ENCODE measurements at regions of chr19 and their contacts with region 1.

Region 1: DNA sequence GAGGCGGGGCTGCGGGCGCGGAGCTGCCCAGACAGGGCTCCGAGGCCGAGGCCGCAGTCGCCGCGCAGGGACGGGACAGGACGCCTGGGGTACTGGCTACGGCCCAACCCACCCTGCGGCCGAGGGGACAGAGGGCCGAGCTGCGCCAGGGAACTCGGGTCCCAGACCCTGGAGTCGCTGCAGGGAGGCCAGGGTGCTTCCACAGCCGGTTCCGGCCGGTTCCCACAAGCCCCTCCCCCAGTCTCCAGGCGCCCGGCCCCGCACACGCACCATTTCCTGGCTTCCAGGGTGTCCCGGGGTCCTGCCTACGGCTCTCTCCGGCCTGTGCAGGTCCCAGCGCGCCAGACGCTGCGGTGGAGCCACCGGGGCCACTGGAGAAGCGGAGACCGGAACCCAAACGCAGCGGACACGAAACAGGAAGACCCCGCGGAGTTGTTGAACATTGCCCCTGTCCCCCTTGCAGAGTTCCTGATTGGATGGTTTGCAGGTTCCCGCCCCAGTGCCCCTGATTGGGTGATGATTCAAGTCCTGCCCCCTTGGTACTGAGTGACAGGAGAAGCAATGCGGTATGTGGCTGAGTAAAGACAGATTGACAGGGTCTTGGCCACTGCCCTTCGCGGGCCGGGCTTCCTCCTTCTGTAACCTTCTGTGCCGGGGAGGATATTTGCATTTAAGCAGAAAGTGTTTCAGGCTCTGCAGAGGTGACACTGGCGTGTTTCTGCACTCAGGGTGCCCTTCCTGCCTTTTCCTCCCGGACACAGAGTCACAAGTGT is at the start of gene ZNF564:
- DNase-seq: peak; percentile 74 to 97 (median 95)
- ATAC-seq: peak; percentile 99
- H3K4me3 ChIP-seq: peak within 1 kb of the TSS; percentile 88
- H3K4me3 Mint-ChIP-seq: peak within 1 kb of the TSS; percentile 89 to 100 (median 98)
- H3K27ac ChIP-seq: peak within 1 kb of the TSS; percentile 90
- H3K27ac Mint-ChIP-seq: peak within 1 kb of the TSS; percentile 92 to 98 (median 95)
- H3K4me1 ChIP-seq: peaks cover 8 to 28% of the 10 kb centered on the region in 2 donors
- H3K4me1 Mint-ChIP-seq: peaks cover 29 to 55% (median 47%) of the 10 kb centered on the region in 7 donors
- H3K27me3 ChIP-seq: no peaks in the 10 kb centered on the region
- H3K27me3 Mint-ChIP-seq: peaks cover 0 to 4% (median 0%) of the 10 kb centered on the region in 5 donors
- total RNA-seq, gene ZNF564: 10.5 to 33.6 (median 19.0) TPM

Region 2: DNA sequence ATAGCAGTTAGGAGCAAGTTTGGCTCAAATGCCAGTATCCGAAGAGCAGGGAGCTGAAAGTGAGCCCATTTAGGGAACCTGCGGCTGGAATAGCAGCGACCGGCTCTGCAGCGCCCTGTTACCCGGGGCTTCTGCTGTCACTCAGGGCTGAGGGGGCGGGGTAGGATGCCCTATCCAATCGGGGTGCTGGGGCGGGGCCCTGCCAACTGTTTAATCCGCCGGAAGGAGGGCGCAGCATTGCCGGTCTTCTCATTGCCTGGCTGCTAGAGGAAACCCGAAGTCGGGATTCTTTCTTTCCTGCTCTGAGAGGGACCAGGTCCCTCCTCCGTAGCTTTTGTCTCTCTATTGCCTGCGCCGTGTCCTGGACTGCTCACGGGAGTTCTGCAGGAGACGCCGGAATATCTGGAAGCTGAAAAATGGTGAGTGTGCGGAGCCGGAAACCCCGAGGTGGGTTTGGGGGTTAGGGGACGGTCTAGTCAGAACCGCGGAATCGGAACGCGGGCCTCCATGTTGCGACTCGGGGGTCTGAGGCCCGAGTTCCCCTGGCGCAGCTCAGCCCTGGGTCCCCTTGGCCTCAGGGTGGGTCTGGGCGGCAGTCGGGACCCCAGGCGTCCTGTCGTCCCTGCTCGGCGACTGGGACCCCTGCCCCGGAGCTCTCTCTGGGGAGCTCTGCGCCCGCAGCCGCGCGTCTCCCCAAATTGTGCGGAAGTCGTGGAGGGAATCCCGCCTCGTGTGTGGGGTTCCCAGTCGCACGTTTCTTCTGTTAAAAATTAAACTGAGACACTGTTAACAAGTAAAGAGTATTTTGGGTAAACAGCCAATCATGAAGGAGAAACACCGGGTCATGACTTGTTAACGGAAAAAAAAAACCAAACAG is 563.6 kb before region 1 on chr19:
- CTCF ChIA-PET with region 1: no interaction called
- POLR2A ChIA-PET with region 1: no interaction called
- intact Hi-C with region 1: loop called in 1 of 2 experiments (anchors 1 kb)
- DNase-seq: peak; percentile 73 to 90 (median 87)
- ATAC-seq: peak; percentile 95
- H3K4me3 ChIP-seq: peak overlapping the region; percentile 98
- H3K4me3 Mint-ChIP-seq: peak overlapping the region; percentile 84 to 99 (median 96)
- H3K27ac ChIP-seq: peak overlapping the region; percentile 88
- H3K27ac Mint-ChIP-seq: peak overlapping the region; percentile 70 to 97 (median 96)
- H3K4me1 ChIP-seq: peaks cover 0 to 8% of the 10 kb centered on the region in 2 donors
- H3K4me1 Mint-ChIP-seq: peaks cover 15 to 39% (median 28%) of the 10 kb centered on the region in 7 donors
- H3K27me3 ChIP-seq: no peaks in the 10 kb centered on the region
- H3K27me3 Mint-ChIP-seq: peaks cover 0 to 2% (median 0%) of the 10 kb centered on the region in 5 donors

Region 3: DNA sequence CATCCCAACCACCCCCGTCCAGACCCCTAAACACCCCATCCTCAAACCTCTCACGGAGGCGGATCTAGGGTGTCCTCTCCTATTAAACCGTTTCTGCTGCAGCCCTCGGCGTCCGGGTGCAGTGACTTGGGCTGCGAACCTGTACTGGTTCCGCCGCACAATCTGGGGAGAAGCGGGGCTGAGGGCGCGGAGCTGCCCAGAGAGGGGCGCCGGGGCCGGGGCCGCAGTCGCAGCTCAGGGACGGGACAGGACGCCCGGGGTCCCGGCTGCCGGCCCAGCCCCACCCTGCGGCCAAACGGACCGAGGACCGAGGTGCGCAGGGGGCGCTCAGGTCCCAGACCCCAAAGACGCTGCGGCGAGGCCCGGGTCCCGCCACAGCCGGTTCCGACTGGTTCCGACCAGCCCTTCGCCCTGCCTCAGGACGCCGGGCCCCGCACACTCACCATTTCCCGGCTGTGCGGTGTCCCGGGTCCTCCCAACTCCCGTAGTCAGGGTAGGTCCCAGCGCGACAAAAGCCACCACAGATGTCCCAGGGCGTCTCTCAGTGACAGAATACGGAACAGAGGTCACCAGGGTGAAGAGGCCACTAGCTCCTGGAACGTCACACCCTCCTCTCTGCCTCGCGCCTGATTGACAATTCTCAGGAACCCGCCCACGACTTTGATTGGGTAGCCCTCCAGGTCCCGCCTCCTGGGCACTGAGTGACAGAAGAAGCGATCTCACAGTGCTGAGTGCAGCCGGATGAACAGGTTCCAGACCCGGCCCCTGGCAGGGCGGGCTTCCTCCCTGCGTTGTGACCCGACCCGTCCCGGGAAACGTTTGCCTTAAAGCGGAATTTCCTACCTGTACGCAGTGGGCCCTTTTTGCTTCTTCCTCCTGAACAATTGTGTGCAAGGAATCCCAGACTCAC is 256.7 kb before region 1 on chr19 and contains the start of gene ZNF44:
- CTCF ChIA-PET with region 1: interaction called, 4 read pairs
- POLR2A ChIA-PET with region 1: no interaction called
- intact Hi-C with region 1: loop called (anchors 1 to 5 kb)
- DNase-seq: peak; percentile 77 to 96 (median 93)
- ATAC-seq: peak; percentile 99
- H3K4me3 ChIP-seq: peak within 1 kb of the TSS; percentile 99
- H3K4me3 Mint-ChIP-seq: peak within 1 kb of the TSS; percentile 89 to 99 (median 99)
- H3K27ac ChIP-seq: peak within 1 kb of the TSS; percentile 90
- H3K27ac Mint-ChIP-seq: peak within 1 kb of the TSS; percentile 93 to 99 (median 97)
- H3K4me1 ChIP-seq: peaks cover 13 to 20% of the 10 kb centered on the region in 2 donors
- H3K4me1 Mint-ChIP-seq: peaks cover 25 to 52% (median 36%) of the 10 kb centered on the region in 7 donors
- H3K27me3 ChIP-seq: no peaks in the 10 kb centered on the region
- H3K27me3 Mint-ChIP-seq: no peaks in the 10 kb centered on the region
- total RNA-seq, gene ZNF44: 16.3 to 67.4 (median 31.3) TPM

Region 4: GRCh38 chr19:12400633-12401502 is 150.4 kb before region 1 on chr19 and contains the start of gene ZNF799:
- CTCF ChIA-PET with region 1: no interaction called
- POLR2A ChIA-PET with region 1: interaction called, 3 read pairs
- intact Hi-C with region 1: loop called in 1 of 2 experiments (anchors 2 kb)
- DNase-seq: peak; percentile 55 to 79 (median 76)
- ATAC-seq: peak; percentile 96
- H3K4me3 ChIP-seq: peak within 1 kb of the TSS; percentile 91
- H3K4me3 Mint-ChIP-seq: peak within 1 kb of the TSS; percentile 88 to 96 (median 94)
- H3K27ac ChIP-seq: peak within 1 kb of the TSS; percentile 59
- H3K27ac Mint-ChIP-seq: peak within 1 kb of the TSS; percentile 75 to 93 (median 82)
- H3K4me1 ChIP-seq: no peaks in the 10 kb centered on the region
- H3K4me1 Mint-ChIP-seq: peaks cover 5 to 34% (median 20%) of the 10 kb centered on the region in 7 donors
- H3K27me3 ChIP-seq: no peaks in the 10 kb centered on the region
- H3K27me3 Mint-ChIP-seq: no peaks in the 10 kb centered on the region
- total RNA-seq, gene ZNF799: 1.7 to 9.9 (median 4.4) TPM

Region 5: DNA sequence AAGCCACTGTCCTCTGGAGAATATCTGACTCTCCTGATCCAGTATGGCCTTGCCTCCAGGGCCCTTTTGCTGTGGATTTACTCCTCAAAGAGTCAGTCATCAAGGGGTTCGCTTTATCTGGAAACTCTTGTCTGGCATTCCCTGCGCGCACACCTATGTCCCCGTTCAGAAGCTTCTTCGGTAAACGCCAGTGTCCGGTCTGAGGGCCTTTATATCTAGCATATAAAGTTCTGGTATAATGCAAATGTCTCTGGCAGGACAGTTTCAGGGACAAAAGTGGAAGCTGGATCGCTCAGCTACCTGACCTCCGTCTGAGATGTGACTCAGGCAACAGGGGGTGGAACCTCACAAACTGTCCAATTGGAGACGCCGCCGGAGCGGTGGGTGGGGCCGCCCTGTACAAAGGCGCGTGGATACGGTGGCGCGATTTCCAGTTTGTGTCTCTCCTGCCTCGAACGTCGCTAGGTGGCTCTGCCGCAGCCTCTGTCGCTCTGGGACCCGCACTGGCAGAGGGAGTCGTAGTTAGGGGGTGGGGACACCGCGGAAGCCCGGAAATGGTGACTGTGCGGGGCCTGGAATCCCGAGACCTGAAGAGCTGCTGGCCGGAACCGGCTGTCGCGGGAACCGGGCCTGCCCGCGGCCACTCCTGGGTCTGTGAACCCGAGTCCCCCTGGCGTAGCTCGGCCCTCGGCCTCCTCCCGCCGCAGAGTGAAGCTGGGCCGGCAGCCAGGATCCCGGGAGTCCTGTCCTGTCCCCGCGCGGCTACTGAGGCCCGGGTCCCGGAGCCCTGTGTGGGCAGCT is 56.0 kb before region 1 on chr19:
- CTCF ChIA-PET with region 1: no interaction called
- POLR2A ChIA-PET with region 1: interaction called, 7 read pairs
- intact Hi-C with region 1: loop called (anchors 1 to 2 kb)
- DNase-seq: peak; percentile 76 to 94 (median 91)
- ATAC-seq: peak; percentile 100
- H3K4me3 ChIP-seq: peak overlapping the region; percentile 80
- H3K4me3 Mint-ChIP-seq: peak overlapping the region; percentile 84 to 95 (median 91)
- H3K27ac ChIP-seq: peak overlapping the region; percentile 72
- H3K27ac Mint-ChIP-seq: peak overlapping the region; percentile 84 to 98 (median 91)
- H3K4me1 ChIP-seq: peaks cover 9 to 11% of the 10 kb centered on the region in 2 donors
- H3K4me1 Mint-ChIP-seq: peaks cover 0 to 16% (median 13%) of the 10 kb centered on the region in 7 donors
- H3K27me3 ChIP-seq: no peaks in the 10 kb centered on the region
- H3K27me3 Mint-ChIP-seq: no peaks in the 10 kb centered on the region

Region 6: GRCh38 chr19:12580163-12580694 is 29.0 kb after region 1 on chr19:
- CTCF ChIA-PET with region 1: no interaction called
- POLR2A ChIA-PET with region 1: no interaction called
- intact Hi-C with region 1: no loop called
- DNase-seq: no peak
- ATAC-seq: no peak
- H3K4me3 ChIP-seq: no peak overlapping the region
- H3K4me3 Mint-ChIP-seq: no peak overlapping the region
- H3K27ac ChIP-seq: no peak overlapping the region
- H3K27ac Mint-ChIP-seq: no peak overlapping the region
- H3K4me1 ChIP-seq: no peaks in the 10 kb centered on the region
- H3K4me1 Mint-ChIP-seq: peaks cover 0 to 6% (median 0%) of the 10 kb centered on the region in 7 donors
- H3K27me3 ChIP-seq: no peaks in the 10 kb centered on the region
- H3K27me3 Mint-ChIP-seq: no peaks in the 10 kb centered on the region

Region 7: GRCh38 chr19:12610540-12611360 is 59.5 kb after region 1 on chr19 and contains the starts of genes ZNF490 and ZNF791:
- CTCF ChIA-PET with region 1: no interaction called
- POLR2A ChIA-PET with region 1: interaction called, 3 read pairs
- intact Hi-C with region 1: loop called (anchors 1 to 2 kb)
- DNase-seq: peak; percentile 81 to 97 (median 94)
- ATAC-seq: peak; percentile 94
- H3K4me3 ChIP-seq: peak within 1 kb of the TSS; percentile 71
- H3K4me3 Mint-ChIP-seq: peak within 1 kb of the TSS; percentile 94 to 100 (median 100)
- H3K27ac ChIP-seq: peak within 1 kb of the TSS; percentile 95
- H3K27ac Mint-ChIP-seq: peak within 1 kb of the TSS; percentile 97 to 100 (median 99)
- H3K4me1 ChIP-seq: peaks cover 24 to 41% of the 10 kb centered on the region in 2 donors
- H3K4me1 Mint-ChIP-seq: peaks cover 16 to 48% (median 36%) of the 10 kb centered on the region in 7 donors
- H3K27me3 ChIP-seq: no peaks in the 10 kb centered on the region
- H3K27me3 Mint-ChIP-seq: no peaks in the 10 kb centered on the region
- total RNA-seq, gene ZNF490: 10.3 to 14.9 (median 11.6) TPM
- total RNA-seq, gene ZNF791: 29.1 to 53.3 (median 38.7) TPM

Region 8: GRCh38 chr19:12722566-12723380 is 171.5 kb after region 1 on chr19:
- CTCF ChIA-PET with region 1: no interaction called
- POLR2A ChIA-PET with region 1: no interaction called
- intact Hi-C with region 1: loop called in 1 of 2 experiments (anchors 5 kb)
- DNase-seq: peak; percentile 66 to 97 (median 91)
- ATAC-seq: peak; percentile 96
- H3K4me3 ChIP-seq: peak overlapping the region; percentile 91
- H3K4me3 Mint-ChIP-seq: peak overlapping the region; percentile 86 to 96 (median 93)
- H3K27ac ChIP-seq: peak overlapping the region; percentile 85
- H3K27ac Mint-ChIP-seq: peak overlapping the region; percentile 89 to 97 (median 95)
- H3K4me1 ChIP-seq: peaks cover 11 to 16% of the 10 kb centered on the region in 2 donors
- H3K4me1 Mint-ChIP-seq: peaks cover 20 to 43% (median 38%) of the 10 kb centered on the region in 7 donors
- H3K27me3 ChIP-seq: no peaks in the 10 kb centered on the region
- H3K27me3 Mint-ChIP-seq: peaks cover 0 to 2% (median 0%) of the 10 kb centered on the region in 5 donors